BJ (cell line): ENCODE measurements at regions of chr7 and their contacts with region 1.

Region 1: DNA sequence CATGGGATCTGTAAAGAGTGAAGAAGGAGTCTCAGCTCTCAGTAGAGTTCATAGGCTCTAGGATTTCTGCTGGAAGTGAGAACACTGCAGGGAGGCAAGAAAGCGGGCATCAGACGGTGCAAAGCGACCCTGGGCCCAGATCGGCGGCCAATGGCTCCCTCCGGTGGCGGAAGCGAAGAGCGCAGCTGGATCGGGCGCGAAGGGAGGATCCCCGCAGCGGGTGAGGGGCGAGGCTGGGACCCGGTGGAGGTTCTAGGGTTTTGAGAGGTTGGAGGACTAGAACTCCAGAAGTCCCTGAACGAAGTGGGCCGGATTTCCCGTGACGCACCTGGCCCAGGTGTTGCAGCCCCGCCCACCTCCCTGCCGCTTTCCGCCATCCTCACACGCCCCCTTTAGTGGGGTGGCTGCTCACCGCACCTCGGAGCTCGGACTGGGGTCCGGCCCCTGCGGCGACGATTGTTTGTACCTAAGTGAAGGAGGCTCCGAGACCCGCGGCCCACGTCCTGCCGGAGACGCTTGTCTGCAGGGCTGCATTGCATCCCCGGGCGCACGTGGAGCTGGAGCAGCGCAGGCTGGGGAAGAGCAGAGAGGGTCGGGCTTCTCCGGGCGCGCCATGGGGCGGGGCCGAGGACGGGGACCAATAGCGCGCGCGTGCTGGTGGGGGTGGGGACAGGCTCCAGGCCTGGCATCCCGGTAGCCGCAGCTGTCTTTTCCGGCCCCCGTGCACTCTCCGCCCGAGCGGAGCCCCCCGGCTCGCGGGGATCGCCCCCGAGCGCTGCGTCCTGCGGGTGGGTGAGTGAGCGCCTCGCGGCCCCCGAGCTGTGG is at the start of gene SLC12A9:
- DNase-seq: peak; percentile 31
- H3K4me3 ChIP-seq: peak within 1 kb of the TSS; percentile 79
- H3K27me3 ChIP-seq: no peaks in the 10 kb centered on the region
- CTCF ChIP-seq: peak; percentile 90
- polyA plus RNA-seq, gene SLC12A9: 14.2 and 23.1 TPM in 2 replicates

Region 2: DNA sequence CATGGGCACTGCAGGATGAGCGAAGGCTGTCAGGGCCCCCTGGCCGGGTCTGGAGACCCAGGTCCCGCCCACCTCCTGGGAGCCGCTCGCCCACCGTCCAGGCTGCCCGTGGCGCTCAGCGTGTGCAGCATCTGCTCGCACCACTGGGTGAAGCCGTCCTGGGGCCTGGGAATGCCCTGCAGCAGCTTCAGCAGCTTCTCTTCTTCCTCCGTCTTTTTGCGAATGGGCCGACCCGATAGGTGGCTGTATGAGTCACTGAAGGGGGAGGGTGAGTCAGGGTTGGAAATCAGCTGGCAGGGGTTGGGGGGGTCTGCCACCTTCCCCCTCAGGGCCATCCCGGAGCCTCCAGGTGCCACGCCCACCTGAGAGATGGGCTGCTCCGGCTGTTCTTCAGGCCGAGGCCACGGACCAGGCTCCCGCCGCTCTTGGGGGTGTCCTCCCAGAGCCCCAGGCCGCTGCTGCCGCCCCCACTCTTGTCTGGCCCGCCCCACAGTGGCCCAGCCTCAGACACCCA is 170.0 kb before region 1 on chr7:
- CTCF ChIA-PET with region 1: interaction called, 12 read pairs
- POLR2A ChIA-PET with region 1: no interaction called
- DNase-seq: no peak
- H3K4me3 ChIP-seq: no peak overlapping the region
- H3K27me3 ChIP-seq: no peaks in the 10 kb centered on the region
- CTCF ChIP-seq: no peak

Region 3: GRCh38 chr7:100705753-100706671 is 146.2 kb before region 1 on chr7 and contains the start of gene POP7:
- CTCF ChIA-PET with region 1: interaction called, 112 read pairs
- POLR2A ChIA-PET with region 1: interaction called, 8 read pairs
- DNase-seq: peak; percentile 71
- H3K4me3 ChIP-seq: peak within 1 kb of the TSS; percentile 97
- H3K27me3 ChIP-seq: no peaks in the 10 kb centered on the region
- CTCF ChIP-seq: no peak
- polyA plus RNA-seq, gene POP7: 24.5 and 35.2 TPM in 2 replicates

Region 4: DNA sequence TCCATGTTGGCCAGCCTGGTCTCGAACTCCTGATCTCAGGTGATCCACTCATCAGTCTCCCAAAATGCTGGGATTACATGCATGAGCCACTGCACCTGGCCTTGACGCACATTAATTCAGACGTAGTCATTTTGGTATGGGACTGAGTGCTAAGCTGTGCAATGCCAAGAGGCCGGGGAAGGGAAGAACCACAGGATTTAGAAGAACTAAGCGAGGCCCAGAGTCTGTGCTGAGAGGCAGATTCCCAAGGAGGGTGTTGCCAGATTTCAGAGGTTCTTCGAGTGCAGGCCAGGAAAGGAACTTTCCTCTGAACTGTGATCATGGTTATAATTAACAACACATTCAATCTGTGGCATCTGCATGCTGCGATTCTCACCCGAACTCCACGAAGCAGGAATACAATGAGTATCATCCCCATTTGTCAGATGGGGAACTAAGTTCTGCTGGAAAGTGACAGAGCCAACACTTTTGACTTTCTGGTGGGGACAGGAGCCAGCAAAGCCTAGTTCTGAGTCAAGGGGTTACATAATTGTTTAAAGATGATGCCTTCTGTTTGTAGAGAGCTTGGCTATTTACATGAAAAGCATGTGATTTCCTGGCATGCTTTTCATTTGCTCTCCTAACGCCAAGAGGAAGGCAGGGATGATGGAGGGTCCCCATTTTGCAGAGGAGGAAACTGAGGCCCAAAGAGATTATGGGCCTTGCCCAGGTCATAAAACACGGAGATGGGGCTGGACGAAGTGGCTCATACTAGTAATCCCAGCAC is 125.1 kb before region 1 on chr7:
- CTCF ChIA-PET with region 1: interaction called, 65 read pairs
- POLR2A ChIA-PET with region 1: interaction called, 3 read pairs
- DNase-seq: peak; percentile 92
- H3K4me3 ChIP-seq: no peak overlapping the region
- H3K27me3 ChIP-seq: peaks cover 27% of the 10 kb centered on the region
- CTCF ChIP-seq: no peak

Region 5: DNA sequence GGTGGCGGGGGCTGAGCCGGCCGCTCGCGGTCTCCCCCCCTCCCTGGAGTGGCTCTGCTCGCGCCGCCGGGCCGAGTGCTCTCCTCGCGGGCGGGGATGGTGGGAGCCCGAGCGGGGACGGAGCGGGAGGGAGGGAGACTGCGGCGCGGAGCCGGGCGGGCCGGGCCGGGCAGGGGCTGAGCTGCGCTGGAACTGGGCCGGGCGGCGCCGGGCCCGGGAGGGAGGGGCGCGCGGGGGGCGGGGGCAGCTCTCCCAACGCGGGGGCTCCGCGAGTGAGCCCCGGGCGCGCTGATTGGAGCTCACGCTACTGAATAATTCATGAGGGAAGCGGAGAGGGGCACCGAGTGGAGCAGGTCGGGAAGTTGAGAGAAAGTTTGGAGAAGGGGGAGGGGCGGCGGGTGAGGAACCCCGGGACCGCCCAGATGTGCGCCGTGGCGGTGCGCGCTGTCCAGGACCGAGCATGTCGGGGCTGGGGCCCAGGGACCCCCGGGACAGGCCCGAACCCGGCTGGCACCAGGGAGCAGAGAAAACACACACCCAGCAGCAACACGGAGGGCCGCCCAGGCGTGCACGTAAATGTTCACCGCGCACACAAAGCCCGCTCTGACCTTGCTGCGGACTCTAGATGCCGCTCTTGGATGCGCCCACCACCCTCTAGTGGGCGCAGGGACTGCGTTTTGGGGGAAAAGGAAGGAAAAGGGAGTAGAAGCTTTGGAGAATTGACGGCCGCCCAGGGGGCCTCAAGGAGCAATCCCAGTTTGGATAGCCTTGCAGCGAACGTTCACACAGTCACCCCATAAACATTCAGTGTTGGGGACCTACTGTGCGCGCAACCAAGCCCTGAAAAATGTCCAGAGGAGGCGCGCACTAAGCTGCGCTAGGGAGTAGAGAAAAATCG is 24.7 kb before region 1 on chr7 and contains the start of gene EPHB4:
- CTCF ChIA-PET with region 1: interaction called, 42 read pairs
- POLR2A ChIA-PET with region 1: no interaction called
- DNase-seq: peak; percentile 32
- H3K4me3 ChIP-seq: peak within 1 kb of the TSS; percentile 74
- H3K27me3 ChIP-seq: no peaks in the 10 kb centered on the region
- CTCF ChIP-seq: peak; percentile 67
- polyA plus RNA-seq, gene EPHB4: 23.8 and 30.5 TPM in 2 replicates